Activated T-helper 1 cell treated with anti-CD3 and anti-CD28 coated beads, Interleukin-12 subunit alpha, Interleukin-12 subunit beta, Interleukin-2, Interleukin-4 antibody, amounts not matched to agents 30 ng/mL and 10 ng/mL and 1 ng/mL, durations not matched to agents 14 hours and 24 hours and 36 hours (primary cell): ENCODE measurements at regions of chr18 and their contacts with region 1.

Region 1: DNA sequence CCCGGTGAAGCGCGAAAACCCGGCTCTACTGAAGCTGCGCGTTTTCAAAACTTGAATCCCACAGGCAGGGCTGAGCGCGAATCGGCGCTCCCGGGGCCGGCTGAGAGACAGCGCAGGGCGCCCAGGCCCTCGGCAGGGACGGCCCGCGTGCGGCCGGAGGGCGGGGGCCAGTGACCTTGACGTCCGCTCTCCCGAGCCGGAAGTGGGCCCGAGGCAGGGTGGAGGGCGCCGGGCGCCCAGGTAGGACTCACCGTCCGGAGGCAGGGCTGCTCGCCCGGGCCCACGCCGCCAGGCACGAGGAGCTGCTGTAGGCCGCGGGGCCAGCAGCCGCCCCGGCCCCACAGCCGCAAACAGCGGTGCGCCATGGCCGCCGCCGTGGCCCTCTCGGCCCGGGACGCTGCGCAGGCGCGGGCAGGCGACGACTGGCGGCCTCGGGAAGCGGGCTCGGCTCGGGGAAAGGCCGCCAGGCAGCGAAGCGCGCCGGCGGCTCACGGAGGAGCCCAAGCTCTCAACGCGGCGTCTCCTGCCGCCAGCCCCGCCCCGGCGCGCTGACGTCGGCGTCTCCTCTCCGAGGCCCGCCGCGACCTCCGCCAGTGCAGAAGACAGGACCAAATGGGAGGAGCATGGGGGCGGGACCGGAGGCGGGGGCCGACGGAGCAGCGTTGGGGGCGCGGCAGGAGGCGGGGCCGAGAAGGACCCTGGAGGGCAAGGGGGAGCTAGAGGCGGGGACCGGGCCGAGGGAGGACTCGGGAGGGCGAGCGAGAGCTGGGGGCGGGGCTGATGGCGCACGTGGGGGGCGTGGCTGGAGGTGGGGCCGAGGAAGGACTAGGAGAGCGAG is at the start of gene AFG3L2:
- DNase-seq: peak; percentile 100
- H3K4me3 Mint-ChIP-seq: peak within 1 kb of the TSS; percentile 92
- H3K27ac Mint-ChIP-seq: peak within 1 kb of the TSS; percentile 92
- H3K4me1 Mint-ChIP-seq: peaks cover 36% of the 10 kb centered on the region
- H3K27me3 Mint-ChIP-seq: peaks cover 18% of the 10 kb centered on the region
- total RNA-seq, gene AFG3L2: 66.8 and 70.6 TPM in 2 replicates

Region 2: GRCh38 chr18:11851146-11851805 is 525.7 kb before region 1 on chr18 and contains the start of gene CHMP1B:
- intact Hi-C with region 1: loop called (anchors 2 kb)
- DNase-seq: peak; percentile 95
- H3K4me3 Mint-ChIP-seq: peak within 1 kb of the TSS; percentile 99
- H3K27ac Mint-ChIP-seq: peak within 1 kb of the TSS; percentile 100
- H3K4me1 Mint-ChIP-seq: peaks cover 38% of the 10 kb centered on the region
- H3K27me3 Mint-ChIP-seq: peaks cover 6% of the 10 kb centered on the region
- total RNA-seq, gene CHMP1B: 24.8 and 26.8 TPM in 2 replicates

Region 3: GRCh38 chr18:12076424-12077140 is 300.4 kb before region 1 on chr18:
- intact Hi-C with region 1: no loop called
- DNase-seq: no peak
- H3K4me3 Mint-ChIP-seq: no peak overlapping the region
- H3K27ac Mint-ChIP-seq: no peak overlapping the region
- H3K4me1 Mint-ChIP-seq: no peaks in the 10 kb centered on the region
- H3K27me3 Mint-ChIP-seq: peaks cover 34% of the 10 kb centered on the region

Region 4: DNA sequence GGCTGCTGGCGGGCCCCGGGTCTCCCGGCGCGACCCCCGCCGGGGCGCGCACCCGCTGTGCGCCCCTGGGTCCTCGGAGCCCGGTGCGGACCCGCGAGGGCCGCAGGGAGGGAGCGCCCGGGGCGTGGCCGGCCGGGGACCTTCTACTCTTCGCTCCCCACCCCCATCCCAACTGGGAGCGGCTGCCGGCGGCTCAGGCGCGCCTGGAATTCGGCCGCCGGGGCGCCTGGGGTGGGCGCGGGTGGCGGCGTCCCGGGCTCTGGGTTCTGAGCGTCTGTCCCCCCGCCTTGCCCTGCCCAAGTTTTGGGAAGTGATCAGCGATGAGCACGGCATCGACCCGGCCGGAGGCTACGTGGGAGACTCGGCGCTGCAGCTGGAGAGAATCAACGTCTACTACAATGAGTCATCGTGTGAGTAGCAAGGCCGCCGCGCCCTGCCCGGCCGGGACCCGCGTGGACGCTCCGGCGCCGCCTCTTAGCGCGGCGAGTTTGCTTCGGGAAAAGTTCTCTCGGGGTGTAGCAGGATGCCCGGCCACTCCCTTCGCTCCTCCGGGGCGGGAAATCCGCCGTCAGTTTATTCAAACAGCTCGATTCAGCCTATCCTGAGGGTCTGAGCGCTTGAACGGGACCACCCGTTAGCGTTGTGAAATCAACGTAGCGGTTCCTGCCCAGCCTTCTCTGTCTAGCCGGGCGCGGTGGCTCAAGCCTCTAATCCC is 68.4 kb before region 1 on chr18:
- intact Hi-C with region 1: loop called (anchors 2 kb)
- DNase-seq: peak; percentile 21
- H3K4me3 Mint-ChIP-seq: peak overlapping the region; percentile 80
- H3K27ac Mint-ChIP-seq: peak overlapping the region; percentile 76
- H3K4me1 Mint-ChIP-seq: peaks cover 19% of the 10 kb centered on the region
- H3K27me3 Mint-ChIP-seq: peaks cover 32% of the 10 kb centered on the region

Region 5: GRCh38 chr18:12420831-12421421 is 44.0 kb after region 1 on chr18:
- intact Hi-C with region 1: loop called (anchors 5 kb)
- DNase-seq: no peak
- H3K4me3 Mint-ChIP-seq: peak overlapping the region; percentile 77
- H3K27ac Mint-ChIP-seq: no peak overlapping the region
- H3K4me1 Mint-ChIP-seq: peaks cover 10% of the 10 kb centered on the region
- H3K27me3 Mint-ChIP-seq: peaks cover 9% of the 10 kb centered on the region

Region 6: DNA sequence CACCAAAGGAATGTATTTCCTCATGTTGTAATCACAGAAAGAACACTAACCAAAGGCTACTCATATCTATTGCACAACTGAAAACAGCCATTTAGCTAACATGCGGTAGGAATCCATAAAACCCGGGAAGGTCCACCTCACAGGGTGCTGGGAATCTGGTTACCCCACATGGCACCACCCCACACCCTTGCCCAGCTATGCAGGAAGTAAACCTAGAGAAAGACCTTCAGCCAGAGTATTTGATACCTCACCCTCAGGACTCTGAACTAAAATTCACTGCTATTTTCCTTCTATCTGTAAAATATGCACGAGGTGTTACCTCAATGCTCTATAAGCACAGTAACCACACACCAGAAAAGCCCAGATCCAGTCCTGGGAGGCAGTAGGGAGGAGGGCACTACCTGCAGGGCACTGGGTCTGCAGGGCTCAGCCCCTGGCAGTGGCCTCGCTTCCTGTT is 461.3 kb after region 1 on chr18:
- intact Hi-C with region 1: loop called (anchors 1 kb)
- DNase-seq: peak; percentile 16
- H3K4me3 Mint-ChIP-seq: peak overlapping the region; percentile 78
- H3K27ac Mint-ChIP-seq: peak overlapping the region; percentile 92
- H3K4me1 Mint-ChIP-seq: peaks cover 78% of the 10 kb centered on the region
- H3K27me3 Mint-ChIP-seq: no peaks in the 10 kb centered on the region

Region 7: DNA sequence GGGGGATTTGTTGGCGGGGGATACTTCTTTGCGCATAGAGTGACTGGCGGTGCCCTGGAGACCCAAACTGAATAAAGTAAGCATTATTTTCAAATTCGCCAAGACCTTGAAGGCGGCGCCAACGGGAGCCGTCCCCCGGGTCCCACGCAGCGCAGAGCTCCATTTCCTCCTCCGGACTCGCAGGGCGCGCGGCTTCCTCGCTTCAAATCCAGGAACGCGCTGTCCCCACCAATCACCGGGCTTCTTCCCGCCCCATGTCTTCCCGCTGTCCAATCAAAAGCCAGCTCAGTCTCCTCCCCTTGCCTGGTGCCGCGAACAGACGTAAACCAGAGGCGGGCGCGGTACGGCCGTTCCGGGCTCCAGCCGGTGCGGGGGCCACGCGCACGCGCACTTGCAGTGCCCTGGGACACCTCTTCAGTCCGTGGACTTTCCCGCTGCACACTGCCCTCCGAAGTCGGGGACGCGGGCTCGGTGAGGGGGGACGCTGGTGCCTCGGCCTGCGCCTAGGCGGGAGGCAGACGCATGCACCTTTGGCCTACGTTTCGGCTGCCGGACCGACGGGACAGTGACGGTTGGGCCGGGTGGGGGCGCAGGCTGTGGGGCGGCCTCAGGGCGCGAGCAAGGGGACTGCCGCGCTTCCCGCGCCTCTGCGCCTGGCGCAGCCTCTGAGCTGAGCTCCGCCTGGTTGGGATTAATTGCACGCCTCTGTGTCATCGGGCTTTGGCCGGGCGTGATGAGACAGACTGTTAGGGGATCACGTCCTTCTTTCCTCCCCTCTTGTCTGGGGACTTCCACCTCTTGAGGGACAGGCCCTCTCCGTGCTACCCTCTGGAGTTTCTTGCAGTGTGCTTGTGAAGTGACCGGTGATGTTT is 614.3 kb after region 1 on chr18 and contains the start of gene CEP192:
- intact Hi-C with region 1: loop called (anchors 5 kb)
- DNase-seq: peak; percentile 98
- H3K4me3 Mint-ChIP-seq: peak within 1 kb of the TSS; percentile 93
- H3K27ac Mint-ChIP-seq: peak within 1 kb of the TSS; percentile 94
- H3K4me1 Mint-ChIP-seq: peaks cover 24% of the 10 kb centered on the region
- H3K27me3 Mint-ChIP-seq: peaks cover 1% of the 10 kb centered on the region
- total RNA-seq, gene CEP192: 31.2 and 32.0 TPM in 2 replicates